PC-9 (cell line): ENCODE measurements at regions of chr11 and their contacts with region 1.

Region 1: GRCh38 chr11:108467091-108467823 is at the start of gene C11orf65:
- DNase-seq: peak; percentile 93 to 94
- H3K4me3 ChIP-seq: peak within 1 kb of the TSS; percentile 80
- H3K27ac ChIP-seq: peak within 1 kb of the TSS; percentile 92
- H3K4me1 ChIP-seq: peaks cover 16% of the 10 kb centered on the region
- H3K27me3 ChIP-seq: no peaks in the 10 kb centered on the region
- CTCF ChIP-seq: no peak
- total RNA-seq, gene C11orf65: 1.7 and 1.9 TPM in 2 replicates

Region 2: DNA sequence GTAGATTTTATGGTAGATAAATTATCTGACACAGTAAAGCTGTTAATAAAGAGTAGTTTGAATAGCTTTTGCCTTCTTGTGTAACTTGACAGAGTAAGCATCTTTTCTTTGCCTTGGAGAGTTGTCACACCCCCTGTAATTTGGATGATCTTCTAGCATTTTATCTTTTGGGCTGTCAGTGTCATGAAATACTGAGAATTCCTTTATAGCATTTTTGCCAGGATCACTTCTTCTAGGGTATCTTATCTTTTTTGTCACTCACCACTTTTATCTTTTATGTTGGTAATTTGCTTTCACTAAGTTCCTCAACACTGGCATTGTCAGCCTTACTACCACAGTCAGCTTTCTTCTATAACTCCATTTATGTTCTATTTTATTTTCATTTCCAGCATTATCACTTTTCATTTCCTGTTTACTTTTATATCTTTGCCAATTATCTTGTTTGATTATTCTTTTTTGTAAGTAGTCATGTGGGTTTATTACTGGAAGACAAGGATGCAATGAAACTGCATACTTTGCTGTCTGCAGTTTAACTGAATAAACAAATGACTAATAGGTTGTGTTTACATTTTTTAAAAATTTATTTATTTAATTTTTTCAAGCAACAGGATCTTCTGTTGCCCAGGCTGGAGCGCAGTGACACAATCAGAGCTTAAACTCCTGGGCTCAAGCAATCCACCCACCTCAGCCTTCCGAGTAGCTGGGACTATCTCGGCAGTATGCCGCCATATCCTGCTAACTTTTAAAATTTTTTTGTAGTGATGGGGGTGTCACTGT is 373.9 kb before region 1 on chr11:
- CTCF ChIA-PET with region 1: no interaction called
- POLR2A ChIA-PET with region 1: interaction called, 12 read pairs
- intact Hi-C with region 1: no loop called
- DNase-seq: peak in 1 of 2 experiments; percentile 46
- H3K4me3 ChIP-seq: no peak overlapping the region
- H3K27ac ChIP-seq: 0 out of 2 replicates have a peak overlapping the region, but pooled peaks have one; percentile 9
- H3K4me1 ChIP-seq: no peaks in the 10 kb centered on the region; the same call in 1 of the 2 replicates
- H3K27me3 ChIP-seq: no peaks in the 10 kb centered on the region
- CTCF ChIP-seq: no peak

Region 3: GRCh38 chr11:108112057-108112456 is 355.2 kb before region 1 on chr11:
- CTCF ChIA-PET with region 1: no interaction called
- POLR2A ChIA-PET with region 1: no interaction called
- intact Hi-C with region 1: no loop called
- DNase-seq: no peak
- H3K4me3 ChIP-seq: no peak overlapping the region
- H3K27ac ChIP-seq: no peak overlapping the region
- H3K4me1 ChIP-seq: no peaks in the 10 kb centered on the region
- H3K27me3 ChIP-seq: no peaks in the 10 kb centered on the region
- CTCF ChIP-seq: no peak